PC-3 (cell line): ENCODE measurements at regions of chr9 and their contacts with region 1.

Region 1: DNA sequence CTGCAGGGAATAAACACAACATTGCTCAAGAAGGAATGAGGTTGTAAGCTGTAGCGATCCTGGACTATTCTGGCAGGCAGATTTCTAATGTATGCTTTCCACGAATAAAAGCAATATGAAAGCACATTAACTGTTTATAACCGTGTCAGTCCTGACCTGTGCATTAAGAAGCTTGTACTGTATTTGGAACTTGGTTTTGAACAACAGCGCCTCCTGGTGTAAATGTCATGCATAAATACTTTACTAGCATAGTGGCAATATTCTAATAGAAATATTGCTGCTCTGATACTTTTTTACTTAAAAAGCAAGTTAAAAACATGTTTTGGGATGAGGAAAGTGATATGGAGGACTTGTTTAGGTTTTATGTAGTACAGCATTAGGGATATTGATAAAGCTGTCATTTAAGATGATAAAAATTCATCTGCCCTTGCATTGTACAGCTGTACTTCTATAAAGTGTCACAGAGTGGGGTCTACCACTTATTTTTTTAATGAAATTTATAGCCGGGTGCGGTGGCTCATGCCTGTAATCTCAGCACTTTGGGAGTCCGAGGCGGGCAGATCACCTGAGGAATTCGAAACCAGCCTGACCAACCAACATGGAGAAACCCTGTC is 70.7 kb upstream of the GNE start:
- DNase-seq: peak; percentile 77
- ATAC-seq: peak; percentile 68
- H3K4me3 ChIP-seq: no peak overlapping the region
- H3K27ac ChIP-seq: no peak overlapping the region
- H3K4me1 ChIP-seq: peaks cover 9% of the 10 kb centered on the region
- H3K27me3 ChIP-seq: no peaks in the 10 kb centered on the region
- CTCF ChIP-seq: peak; percentile 80

Region 2: GRCh38 chr9:36163049-36163785 is 165.7 kb before region 1 on chr9:
- CTCF ChIA-PET with region 1: no interaction called
- POLR2A ChIA-PET with region 1: no interaction called
- intact Hi-C with region 1: no loop called
- DNase-seq: no peak
- ATAC-seq: no peak
- H3K4me3 ChIP-seq: no peak overlapping the region
- H3K27ac ChIP-seq: peak overlapping the region; percentile 48
- H3K4me1 ChIP-seq: peaks cover 13% of the 10 kb centered on the region
- H3K27me3 ChIP-seq: no peaks in the 10 kb centered on the region
- CTCF ChIP-seq: no peak

Region 3: DNA sequence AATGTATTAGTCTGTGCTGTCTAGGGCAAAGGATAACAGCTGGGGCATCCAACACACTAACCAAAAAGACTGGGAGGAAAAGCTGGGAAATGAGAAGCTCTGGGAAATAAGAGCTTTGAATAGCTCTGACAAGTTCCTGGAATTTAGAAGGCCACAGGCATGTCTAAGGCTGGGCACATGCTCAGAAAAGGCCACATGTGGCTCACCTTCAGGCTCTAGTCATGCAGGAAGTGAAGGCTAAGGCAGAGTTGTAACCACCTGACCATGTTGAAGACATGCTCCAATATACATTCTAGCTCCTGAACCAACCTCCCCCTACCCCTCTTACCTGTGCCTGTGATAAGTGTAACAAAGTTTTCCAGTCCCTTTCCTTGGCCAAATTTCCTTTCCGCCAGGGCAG is 106.5 kb before region 1 on chr9:
- CTCF ChIA-PET with region 1: no interaction called
- POLR2A ChIA-PET with region 1: interaction called, 19 read pairs
- intact Hi-C with region 1: no loop called
- DNase-seq: no peak
- ATAC-seq: no peak
- H3K4me3 ChIP-seq: no peak overlapping the region
- H3K27ac ChIP-seq: no peak overlapping the region
- H3K4me1 ChIP-seq: no peaks in the 10 kb centered on the region
- H3K27me3 ChIP-seq: no peaks in the 10 kb centered on the region
- CTCF ChIP-seq: no peak

Region 4: DNA sequence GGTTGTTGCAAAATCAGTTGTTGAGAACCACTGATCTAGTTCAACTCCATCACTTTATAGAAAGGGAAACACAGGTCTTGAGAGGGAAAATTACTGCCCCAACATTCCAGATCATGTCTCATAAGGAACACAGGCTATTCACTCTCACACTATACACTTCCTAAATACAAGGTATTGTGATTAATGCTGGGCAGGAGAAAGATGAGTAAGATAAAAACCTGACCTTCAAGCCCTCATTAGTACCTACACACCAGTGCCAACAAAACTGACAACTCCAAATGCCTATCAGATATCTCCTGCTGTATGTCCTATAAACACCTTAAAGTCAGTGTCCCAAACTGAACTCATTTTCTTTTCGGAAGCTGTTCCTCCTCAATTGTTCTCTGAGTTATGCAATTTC is 78.8 kb before region 1 on chr9:
- CTCF ChIA-PET with region 1: no interaction called
- POLR2A ChIA-PET with region 1: interaction called, 9 read pairs
- intact Hi-C with region 1: loop called (anchors 1 kb)
- DNase-seq: no peak
- ATAC-seq: peak; percentile 37; the same call in 1 of the 2 replicates
- H3K4me3 ChIP-seq: no peak overlapping the region
- H3K27ac ChIP-seq: no peak overlapping the region
- H3K4me1 ChIP-seq: no peaks in the 10 kb centered on the region
- H3K27me3 ChIP-seq: no peaks in the 10 kb centered on the region
- CTCF ChIP-seq: no peak